Transverse colon (tissue), 4 donors: ENCODE measurements at regions of chr18 and their contacts with region 1.

Region 1: DNA sequence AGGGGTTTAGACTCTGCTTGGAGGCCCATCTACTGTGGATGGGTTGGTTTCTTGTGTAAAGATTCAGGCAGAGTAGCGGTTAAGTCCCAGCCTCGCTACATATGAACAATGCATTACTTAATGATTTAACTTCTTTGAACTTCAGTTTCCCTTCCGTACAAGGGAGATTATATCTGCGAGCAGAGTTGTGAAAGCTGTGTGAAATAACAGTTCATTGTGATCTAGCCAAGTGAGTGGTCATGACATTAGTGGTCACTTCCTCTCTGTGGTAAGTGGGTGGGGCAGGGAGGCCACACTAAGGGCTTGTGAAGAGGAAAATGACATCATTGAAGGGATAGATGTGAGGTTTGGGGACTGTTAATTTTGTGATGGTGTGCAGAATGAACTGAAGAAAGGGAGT is 14.1 kb upstream of the MEX3C start:
- DNase-seq: peak; percentile 13
- H3K4me3 ChIP-seq: no peak overlapping the region
- H3K27ac ChIP-seq: no peak overlapping the region
- H3K4me1 ChIP-seq: peaks cover 0 to 6% (median 0%) of the 10 kb centered on the region in 4 donors
- H3K27me3 ChIP-seq: no peaks in the 10 kb centered on the region
- CTCF ChIP-seq: no peak
- EP300 ChIP-seq: no peak
- POLR2A ChIP-seq: no peak

Region 2: GRCh38 chr18:50307738-50308470 is 903.6 kb before region 1 on chr18:
- in situ Hi-C with region 1: loop called in 1 of 4 experiments (anchors 25 kb)
- intact Hi-C with region 1: no loop called
- DNase-seq: peak; percentile 95
- H3K4me3 ChIP-seq: peak overlapping the region; percentile 10 to 54 (median 36)
- H3K27ac ChIP-seq: peak overlapping the region; percentile 35 to 71 (median 42)
- H3K4me1 ChIP-seq: peaks cover 0 to 14% (median 5%) of the 10 kb centered on the region in 4 donors
- H3K27me3 ChIP-seq: peaks cover 32% of the 10 kb centered on the region
- CTCF ChIP-seq: no peak
- EP300 ChIP-seq: no peak
- POLR2A ChIP-seq: no peak

Region 3: GRCh38 chr18:51235011-51235789 is 23.6 kb after region 1 on chr18:
- in situ Hi-C with region 1: no loop called
- intact Hi-C with region 1: no loop called
- DNase-seq: no peak
- H3K4me3 ChIP-seq: no peak overlapping the region
- H3K27ac ChIP-seq: no peak overlapping the region
- H3K4me1 ChIP-seq: no peaks in the 10 kb centered on the region
- H3K27me3 ChIP-seq: no peaks in the 10 kb centered on the region
- CTCF ChIP-seq: no peak
- EP300 ChIP-seq: no peak
- POLR2A ChIP-seq: no peak